Activated B cell treated with CpG ODN at 0.5 μM for 24 hours (primary cell): ENCODE measurements at regions of chr12 and their contacts with region 1.

Region 1: DNA sequence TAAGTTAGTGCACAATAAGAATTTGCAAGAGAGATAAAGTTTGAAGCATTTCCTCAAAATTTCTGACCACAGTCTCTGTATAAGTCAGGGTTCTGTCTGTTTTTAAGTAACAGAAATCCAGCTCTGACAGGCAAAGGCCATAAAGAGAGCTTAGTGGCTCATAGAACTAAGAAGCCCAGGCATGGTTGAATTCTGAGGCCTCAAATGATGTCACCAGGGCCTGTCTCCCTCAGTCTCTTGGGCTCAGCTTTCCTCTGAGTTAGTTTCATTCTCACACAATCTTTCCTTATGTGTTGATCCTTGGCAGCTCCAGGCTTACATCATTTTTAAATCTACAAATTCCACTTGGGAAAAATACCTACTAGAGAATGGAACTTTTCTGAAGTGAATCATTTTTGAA is 173.4 kb upstream of the ATP2B1 start:
- DNase-seq: no peak
- ATAC-seq: peak; percentile 52
- H3K4me3 Mint-ChIP-seq: peak overlapping the region; percentile 76
- H3K27ac Mint-ChIP-seq: peak overlapping the region; percentile 97
- H3K4me1 Mint-ChIP-seq: peaks cover 62% of the 10 kb centered on the region
- H3K27me3 Mint-ChIP-seq: no peaks in the 10 kb centered on the region
- CTCF ChIP-seq: no peak

Region 2: DNA sequence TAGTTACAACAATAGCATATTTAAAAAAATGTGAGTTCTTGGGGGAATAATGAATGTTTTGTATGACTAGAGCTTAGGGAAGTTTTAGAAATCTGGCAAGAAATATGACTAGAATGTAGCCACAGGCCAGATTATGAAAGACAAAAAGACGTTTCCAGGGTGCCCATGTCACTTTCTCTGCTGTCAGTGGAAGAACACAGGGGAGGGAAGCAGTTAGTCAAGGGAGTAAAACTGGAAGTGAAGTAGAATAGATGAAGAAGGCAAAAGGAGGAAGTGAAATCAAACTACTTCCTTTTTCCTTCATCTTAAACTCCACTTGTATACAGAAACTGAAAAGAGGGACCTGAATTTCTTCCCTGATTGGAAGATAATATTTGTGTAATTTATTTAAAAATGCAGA is 92.2 kb before region 1 on chr12:
- CTCF ChIA-PET with region 1: no interaction called
- POLR2A ChIA-PET with region 1: no interaction called
- intact Hi-C with region 1: loop called (anchors 1 kb)
- DNase-seq: no peak
- ATAC-seq: peak; percentile 97
- H3K4me3 Mint-ChIP-seq: peak overlapping the region; percentile 67
- H3K27ac Mint-ChIP-seq: peak overlapping the region; percentile 87
- H3K4me1 Mint-ChIP-seq: peaks cover 20% of the 10 kb centered on the region
- H3K27me3 Mint-ChIP-seq: no peaks in the 10 kb centered on the region
- CTCF ChIP-seq: no peak

Region 3: GRCh38 chr12:89862511-89863179 is 19.4 kb before region 1 on chr12:
- CTCF ChIA-PET with region 1: interaction called, 5 read pairs
- POLR2A ChIA-PET with region 1: interaction called, 41 read pairs
- intact Hi-C with region 1: loop called (anchors 1 kb)
- DNase-seq: peak; percentile 30
- ATAC-seq: peak; percentile 76
- H3K4me3 Mint-ChIP-seq: peak overlapping the region; percentile 81
- H3K27ac Mint-ChIP-seq: peak overlapping the region; percentile 96
- H3K4me1 Mint-ChIP-seq: peaks cover 73% of the 10 kb centered on the region
- H3K27me3 Mint-ChIP-seq: no peaks in the 10 kb centered on the region
- CTCF ChIP-seq: no peak

Region 4: DNA sequence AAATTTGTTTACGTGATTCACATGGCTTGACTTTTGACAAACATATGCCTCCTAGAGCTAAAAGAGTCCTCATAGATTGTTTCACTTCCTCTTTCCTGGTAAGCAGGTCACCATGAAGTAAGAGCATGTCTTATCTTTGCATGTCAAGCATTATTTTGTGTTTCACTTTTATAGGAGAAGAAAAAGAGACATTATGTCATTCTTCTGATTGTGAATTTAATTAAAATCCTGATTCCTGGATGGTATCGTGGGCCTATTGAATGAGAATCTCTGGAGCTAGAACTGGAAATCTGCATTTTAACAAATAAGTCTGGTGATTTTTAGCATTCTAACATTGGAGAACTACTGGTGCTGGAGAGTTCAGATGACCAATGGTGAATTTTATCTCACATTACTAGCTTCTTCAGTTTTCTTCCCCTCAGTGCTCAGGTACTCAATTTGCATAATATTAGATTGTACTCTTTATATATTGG is 45.2 kb after region 1 on chr12:
- CTCF ChIA-PET with region 1: interaction called, 4 read pairs
- POLR2A ChIA-PET with region 1: interaction called, 61 read pairs
- intact Hi-C with region 1: loop called (anchors 1 kb)
- DNase-seq: no peak
- ATAC-seq: peak; percentile 90
- H3K4me3 Mint-ChIP-seq: peak overlapping the region; percentile 89
- H3K27ac Mint-ChIP-seq: peak overlapping the region; percentile 98
- H3K4me1 Mint-ChIP-seq: peaks cover 69% of the 10 kb centered on the region
- H3K27me3 Mint-ChIP-seq: no peaks in the 10 kb centered on the region
- CTCF ChIP-seq: no peak

Region 5: DNA sequence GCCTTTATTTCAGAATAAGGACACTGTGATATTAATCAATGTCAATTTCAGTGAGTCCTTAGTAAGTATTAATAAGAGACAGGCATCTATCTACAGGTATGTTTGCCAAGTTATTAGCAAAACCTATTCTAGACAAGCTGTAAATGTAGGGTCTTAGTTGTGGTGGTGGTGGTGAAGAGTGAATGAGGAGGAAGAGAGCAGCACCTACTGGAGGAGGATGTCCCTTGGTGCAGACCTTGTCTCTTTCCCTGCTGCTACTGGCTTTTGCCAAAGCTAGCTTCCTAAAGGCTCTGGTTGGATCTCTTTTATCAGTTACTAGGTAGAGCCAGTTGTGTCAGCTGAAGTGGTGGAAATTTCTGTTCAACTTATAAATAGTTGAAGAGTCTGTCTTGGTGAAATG is 131.4 kb after region 1 on chr12:
- CTCF ChIA-PET with region 1: interaction called, 4 read pairs
- POLR2A ChIA-PET with region 1: interaction called, 5 read pairs
- intact Hi-C with region 1: loop called (anchors 5 kb)
- DNase-seq: no peak
- ATAC-seq: peak; percentile 90
- H3K4me3 Mint-ChIP-seq: no peak overlapping the region
- H3K27ac Mint-ChIP-seq: no peak overlapping the region
- H3K4me1 Mint-ChIP-seq: peaks cover 16% of the 10 kb centered on the region
- H3K27me3 Mint-ChIP-seq: no peaks in the 10 kb centered on the region
- CTCF ChIP-seq: no peak